ENCODE measurements at regions of chr2 and their contacts with region 1.

Region 1: GRCh38 chr2:24084386-24085361 is at the start of gene TP53I3:
- DNase-seq: peak; percentile 94 to 99
- H3K4me3 ChIP-seq: peak within 1 kb of the TSS; percentile 54
- H3K4me3 Mint-ChIP-seq: peak within 1 kb of the TSS; percentile 82
- H3K27ac Mint-ChIP-seq: peak within 1 kb of the TSS; percentile 91
- H3K4me1 ChIP-seq: peaks cover 8% of the 10 kb centered on the region
- H3K4me1 Mint-ChIP-seq: peaks cover 13% of the 10 kb centered on the region
- H3K27me3 ChIP-seq: no peaks in the 10 kb centered on the region
- H3K27me3 Mint-ChIP-seq: no peaks in the 10 kb centered on the region
- CTCF ChIP-seq: peak; percentile 71 to 95
- total RNA-seq, gene TP53I3: 24.8 and 28.1 TPM in 2 replicates

Region 2: DNA sequence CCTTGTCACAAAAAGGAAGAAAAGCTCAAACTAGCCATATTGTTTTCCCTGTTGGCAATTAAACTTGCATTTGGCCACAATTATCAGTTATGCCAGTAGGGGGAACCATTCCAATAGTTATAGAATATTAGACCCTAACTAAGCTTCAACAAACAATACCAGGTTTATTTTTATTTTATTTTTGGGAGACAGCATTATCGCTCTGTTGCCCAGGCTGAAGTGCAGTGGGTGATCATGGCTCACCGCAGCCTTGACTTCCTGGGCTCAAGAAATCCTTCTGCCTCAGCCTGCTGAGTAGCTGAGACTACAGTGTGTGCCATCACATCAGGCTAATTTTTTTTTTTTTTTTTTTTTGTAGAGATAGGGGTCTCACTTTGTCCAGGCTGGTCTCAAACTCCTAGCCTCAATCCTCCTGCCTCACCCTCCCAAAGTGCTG is 259.9 kb before region 1 on chr2:
- CTCF ChIA-PET with region 1: interaction called, 15 read pairs
- POLR2A ChIA-PET with region 1: no interaction called
- intact Hi-C with region 1: loop called (anchors 1 kb)
- DNase-seq: peak in 1 of 2 experiments; percentile 66
- H3K4me3 ChIP-seq: no peak overlapping the region
- H3K4me3 Mint-ChIP-seq: no peak overlapping the region
- H3K27ac Mint-ChIP-seq: no peak overlapping the region
- H3K4me1 ChIP-seq: no peaks in the 10 kb centered on the region
- H3K4me1 Mint-ChIP-seq: no peaks in the 10 kb centered on the region
- H3K27me3 ChIP-seq: no peaks in the 10 kb centered on the region
- H3K27me3 Mint-ChIP-seq: no peaks in the 10 kb centered on the region
- CTCF ChIP-seq: peak; percentile 72 to 74

Region 3: GRCh38 chr2:23939987-23940717 is 144.5 kb before region 1 on chr2 and contains the start of gene UBXN2A:
- CTCF ChIA-PET with region 1: interaction called, 6 read pairs
- POLR2A ChIA-PET with region 1: no interaction called
- intact Hi-C with region 1: loop called (anchors 2 kb)
- DNase-seq: peak; percentile 75 to 90
- H3K4me3 ChIP-seq: peak within 1 kb of the TSS; percentile 56
- H3K4me3 Mint-ChIP-seq: peak within 1 kb of the TSS; percentile 76
- H3K27ac Mint-ChIP-seq: peak within 1 kb of the TSS; percentile 51
- H3K4me1 ChIP-seq: peaks cover 5% of the 10 kb centered on the region
- H3K4me1 Mint-ChIP-seq: peaks cover 18% of the 10 kb centered on the region
- H3K27me3 ChIP-seq: no peaks in the 10 kb centered on the region
- H3K27me3 Mint-ChIP-seq: no peaks in the 10 kb centered on the region
- CTCF ChIP-seq: no peak
- total RNA-seq, gene UBXN2A: 21.6 and 22.0 TPM in 2 replicates

Region 4: DNA sequence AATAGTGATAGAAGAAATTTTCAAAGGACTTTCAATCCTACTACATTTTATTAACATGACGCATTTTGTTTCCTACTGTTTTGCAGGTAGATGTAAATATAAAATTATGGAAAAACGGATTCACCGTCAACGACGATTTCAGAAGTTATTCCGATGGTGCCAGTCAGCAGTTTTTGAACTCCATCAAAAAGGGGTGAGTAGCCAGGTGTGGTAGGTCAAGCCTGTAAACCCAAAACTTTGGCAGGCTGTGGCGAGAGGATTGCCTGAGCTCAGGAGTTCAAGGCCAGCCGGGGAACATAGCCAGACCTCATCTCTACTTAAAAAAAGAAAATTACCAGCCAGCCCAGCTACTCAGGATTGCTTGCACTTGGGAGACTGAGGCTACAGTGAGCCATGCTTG is 107.8 kb before region 1 on chr2:
- CTCF ChIA-PET with region 1: no interaction called
- POLR2A ChIA-PET with region 1: no interaction called
- intact Hi-C with region 1: no loop called
- DNase-seq: no peak
- H3K4me3 ChIP-seq: no peak overlapping the region
- H3K4me3 Mint-ChIP-seq: no peak overlapping the region
- H3K27ac Mint-ChIP-seq: no peak overlapping the region
- H3K4me1 ChIP-seq: no peaks in the 10 kb centered on the region
- H3K4me1 Mint-ChIP-seq: no peaks in the 10 kb centered on the region
- H3K27me3 ChIP-seq: no peaks in the 10 kb centered on the region
- H3K27me3 Mint-ChIP-seq: no peaks in the 10 kb centered on the region
- CTCF ChIP-seq: no peak

Region 5: DNA sequence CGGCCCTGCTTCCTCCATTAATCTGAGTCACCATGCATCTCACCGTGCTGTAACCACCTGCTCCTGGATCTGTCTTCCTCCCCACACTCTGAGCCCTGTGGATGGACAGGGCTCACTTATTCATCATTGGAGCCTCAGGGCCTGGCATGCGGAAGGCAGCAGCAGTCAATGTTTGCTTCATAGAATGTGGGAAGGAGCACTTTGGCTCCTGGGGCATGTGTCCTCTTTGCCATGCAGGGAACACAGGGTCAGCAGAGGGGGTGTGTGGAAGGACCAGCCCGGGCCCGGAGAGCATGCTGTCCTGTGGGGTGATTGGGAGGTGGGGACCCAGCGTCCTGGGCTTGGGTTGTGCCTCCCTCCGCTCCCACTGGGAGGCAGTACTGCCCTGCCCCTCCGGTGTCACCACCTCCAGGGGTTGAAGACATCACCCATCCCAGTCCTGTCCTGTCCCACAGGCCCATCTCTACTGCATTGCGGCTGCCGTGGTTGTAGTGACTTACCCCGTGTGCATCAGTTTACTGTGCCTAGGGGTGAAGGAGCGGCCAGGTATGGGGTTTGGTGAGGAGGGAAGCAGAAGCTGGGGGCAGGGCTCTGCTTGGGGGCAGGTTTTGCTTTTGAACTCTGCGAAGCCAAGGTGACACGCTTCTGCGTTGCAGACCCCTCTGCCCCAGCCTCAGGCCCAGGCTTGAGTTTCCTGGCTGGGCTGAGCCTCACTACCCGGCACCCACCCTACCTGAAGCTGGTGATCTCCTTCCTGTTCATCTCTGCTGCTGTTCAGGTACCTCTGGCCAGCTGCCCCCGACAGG is 63.3 kb before region 1 on chr2:
- CTCF ChIA-PET with region 1: interaction called, 3 read pairs
- POLR2A ChIA-PET with region 1: no interaction called
- intact Hi-C with region 1: loop called (anchors 1 kb)
- DNase-seq: peak in 1 of 2 experiments; percentile 66
- H3K4me3 ChIP-seq: no peak overlapping the region
- H3K4me3 Mint-ChIP-seq: no peak overlapping the region
- H3K27ac Mint-ChIP-seq: no peak overlapping the region
- H3K4me1 ChIP-seq: peaks cover 6% of the 10 kb centered on the region
- H3K4me1 Mint-ChIP-seq: peaks cover 2% of the 10 kb centered on the region
- H3K27me3 ChIP-seq: no peaks in the 10 kb centered on the region
- H3K27me3 Mint-ChIP-seq: no peaks in the 10 kb centered on the region
- CTCF ChIP-seq: peak; percentile 33 to 73

Region 6: DNA sequence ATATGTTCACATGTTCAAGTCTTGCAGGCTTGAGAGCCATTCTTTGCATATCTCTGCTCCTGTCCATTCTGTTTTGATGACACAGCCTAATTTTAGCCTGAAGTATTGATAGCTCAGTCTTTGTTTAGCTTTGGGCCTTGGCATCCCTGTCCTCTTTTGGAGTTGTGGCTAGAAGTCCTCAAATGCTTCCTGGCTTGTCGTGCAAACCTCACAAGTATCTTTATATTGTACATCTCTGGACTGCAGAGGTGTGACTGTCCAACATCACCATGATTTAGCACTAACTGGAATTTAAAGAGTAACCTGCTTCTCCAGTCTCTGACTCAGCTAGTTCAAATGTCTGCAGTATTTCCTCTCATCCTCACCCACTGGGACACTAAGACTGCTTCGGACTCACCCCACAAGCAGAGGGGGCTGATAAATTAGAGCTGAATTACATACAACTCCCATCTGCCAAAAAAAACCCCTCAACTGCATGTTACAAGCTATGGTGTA is 26.8 kb after region 1 on chr2:
- CTCF ChIA-PET with region 1: interaction called, 17 read pairs
- POLR2A ChIA-PET with region 1: interaction called, 7 read pairs
- intact Hi-C with region 1: no loop called
- DNase-seq: peak in 1 of 2 experiments; percentile 13
- H3K4me3 ChIP-seq: no peak overlapping the region
- H3K4me3 Mint-ChIP-seq: no peak overlapping the region
- H3K27ac Mint-ChIP-seq: peak overlapping the region; percentile 73
- H3K4me1 ChIP-seq: peaks cover 21% of the 10 kb centered on the region
- H3K4me1 Mint-ChIP-seq: peaks cover 23% of the 10 kb centered on the region
- H3K27me3 ChIP-seq: no peaks in the 10 kb centered on the region
- H3K27me3 Mint-ChIP-seq: no peaks in the 10 kb centered on the region
- CTCF ChIP-seq: no peak

Region 7: GRCh38 chr2:24153478-24153877 is 68.8 kb after region 1 on chr2:
- CTCF ChIA-PET with region 1: interaction called, 4 read pairs
- POLR2A ChIA-PET with region 1: no interaction called
- intact Hi-C with region 1: loop called (anchors 2 kb)
- DNase-seq: no peak
- H3K4me3 ChIP-seq: no peak overlapping the region
- H3K4me3 Mint-ChIP-seq: no peak overlapping the region
- H3K27ac Mint-ChIP-seq: no peak overlapping the region
- H3K4me1 ChIP-seq: peaks cover 4% of the 10 kb centered on the region; the same call in 1 of the 2 replicates
- H3K4me1 Mint-ChIP-seq: peaks cover 7% of the 10 kb centered on the region
- H3K27me3 ChIP-seq: no peaks in the 10 kb centered on the region
- H3K27me3 Mint-ChIP-seq: no peaks in the 10 kb centered on the region
- CTCF ChIP-seq: no peak

Region 8: DNA sequence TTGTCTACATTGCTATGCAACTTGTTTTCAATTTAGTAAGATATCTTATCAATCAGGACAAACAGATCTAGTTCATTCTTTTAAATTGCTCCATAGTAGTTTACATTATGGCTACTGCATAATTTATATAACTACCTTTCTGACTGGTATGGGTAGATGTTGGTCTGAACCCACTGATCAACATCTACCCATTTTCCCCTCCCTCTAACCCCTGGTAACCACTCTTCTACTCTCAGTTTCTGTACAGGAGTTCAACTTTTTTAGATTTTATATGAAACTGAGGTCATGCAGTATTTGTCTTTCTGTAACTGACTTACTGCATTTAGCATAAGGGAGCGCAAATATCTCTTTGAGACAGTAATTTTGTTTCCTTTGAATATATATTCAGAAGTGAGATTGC is 202.5 kb after region 1 on chr2:
- CTCF ChIA-PET with region 1: no interaction called
- POLR2A ChIA-PET with region 1: no interaction called
- intact Hi-C with region 1: no loop called
- DNase-seq: no peak
- H3K4me3 ChIP-seq: no peak overlapping the region
- H3K4me3 Mint-ChIP-seq: no peak overlapping the region
- H3K27ac Mint-ChIP-seq: no peak overlapping the region
- H3K4me1 ChIP-seq: no peaks in the 10 kb centered on the region
- H3K4me1 Mint-ChIP-seq: no peaks in the 10 kb centered on the region
- H3K27me3 ChIP-seq: no peaks in the 10 kb centered on the region
- H3K27me3 Mint-ChIP-seq: no peaks in the 10 kb centered on the region
- CTCF ChIP-seq: no peak

Region 9: GRCh38 chr2:24382363-24383073 is 297.8 kb after region 1 on chr2:
- CTCF ChIA-PET with region 1: no interaction called
- POLR2A ChIA-PET with region 1: no interaction called
- intact Hi-C with region 1: loop called (anchors 2 kb)
- DNase-seq: peak; percentile 68 to 81
- H3K4me3 ChIP-seq: no peak overlapping the region
- H3K4me3 Mint-ChIP-seq: no peak overlapping the region
- H3K27ac Mint-ChIP-seq: no peak overlapping the region
- H3K4me1 ChIP-seq: peaks cover 10% of the 10 kb centered on the region
- H3K4me1 Mint-ChIP-seq: peaks cover 9% of the 10 kb centered on the region
- H3K27me3 ChIP-seq: no peaks in the 10 kb centered on the region
- H3K27me3 Mint-ChIP-seq: no peaks in the 10 kb centered on the region
- CTCF ChIP-seq: peak; percentile 73 to 89

Measured in Caco-2 (cell line).